Heart right ventricle (tissue), 16 donors: ENCODE measurements at regions of chr18 and their contacts with region 1.

Region 1: GRCh38 chr18:57561728-57562423 is 24.6 kb downstream of the FECH start:
- DNase-seq: peak in 1 of 2 donors; percentile 21
- ATAC-seq: peak in 6 of 8 donors; percentile 35 to 50 (median 42)
- H3K4me3 ChIP-seq: no peak overlapping the region
- H3K27ac ChIP-seq: no peak overlapping the region
- H3K4me1 ChIP-seq: peaks cover 0 to 15% (median 0%) of the 10 kb centered on the region in 9 donors
- H3K27me3 ChIP-seq: no peaks in the 10 kb centered on the region
- CTCF ChIP-seq: peak; percentile 74 to 93 (median 86)

Region 2: DNA sequence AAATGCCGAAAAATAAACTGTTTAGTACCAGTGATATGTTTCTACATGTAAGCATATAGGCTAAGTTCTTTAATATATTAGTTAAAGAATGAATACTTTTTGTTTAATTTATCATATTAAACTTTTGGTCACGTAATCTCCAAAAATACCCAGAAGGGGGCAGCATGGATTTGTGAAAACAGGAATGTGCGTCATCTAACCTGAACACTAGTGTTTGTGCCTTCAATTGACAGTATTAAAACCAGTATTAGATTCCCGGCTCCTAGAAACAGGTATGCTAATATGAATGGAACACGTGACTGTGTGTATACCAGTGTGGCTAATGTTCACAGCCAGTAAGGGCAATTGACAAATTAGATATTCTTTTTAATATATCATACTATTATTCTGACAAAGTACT is 858.9 kb before region 1 on chr18:
- intact Hi-C with region 1: loop called in 1 of 10 experiments (anchors 5 kb)
- DNase-seq: no peak
- ATAC-seq: no peak
- H3K4me3 ChIP-seq: no peak overlapping the region
- H3K27ac ChIP-seq: no peak overlapping the region
- H3K4me1 ChIP-seq: no peaks in the 10 kb centered on the region
- H3K27me3 ChIP-seq: no peaks in the 10 kb centered on the region
- CTCF ChIP-seq: peak in 8 of 9 donors; percentile 21 to 64 (median 44)

Region 3: GRCh38 chr18:56748698-56749268 is 813.1 kb before region 1 on chr18:
- intact Hi-C with region 1: loop called in 9 of 10 experiments (anchors 5 to 10 kb)
- DNase-seq: peak in 1 of 2 donors; percentile 6
- ATAC-seq: no peak
- H3K4me3 ChIP-seq: no peak overlapping the region
- H3K27ac ChIP-seq: no peak overlapping the region
- H3K4me1 ChIP-seq: peaks cover 0 to 25% (median 13%) of the 10 kb centered on the region in 9 donors
- H3K27me3 ChIP-seq: no peaks in the 10 kb centered on the region
- CTCF ChIP-seq: peak; percentile 20 to 82 (median 65)

Region 4: DNA sequence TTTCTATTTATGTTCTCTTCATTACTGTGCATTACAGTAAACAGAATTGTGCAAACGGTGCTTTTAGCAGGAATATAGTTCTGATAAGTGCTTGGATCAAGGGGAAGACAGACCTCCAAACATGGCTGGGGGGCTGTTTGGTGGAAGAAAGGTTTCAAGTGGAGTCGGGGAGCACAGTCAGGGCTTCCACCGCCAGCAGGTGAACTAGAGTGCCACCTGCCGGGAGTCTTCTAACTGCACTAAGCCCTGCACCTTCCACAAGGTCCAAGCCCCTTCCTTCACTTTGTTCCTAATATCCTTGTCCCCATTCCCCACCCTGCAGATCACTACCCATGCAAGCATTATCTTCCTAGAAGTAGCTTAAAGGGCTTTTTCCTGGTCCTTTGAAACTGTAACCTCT is 115.6 kb before region 1 on chr18:
- intact Hi-C with region 1: loop called in 1 of 10 experiments (anchors 10 kb)
- DNase-seq: no peak
- ATAC-seq: no peak
- H3K4me3 ChIP-seq: no peak overlapping the region
- H3K27ac ChIP-seq: no peak overlapping the region
- H3K4me1 ChIP-seq: peaks cover 0 to 4% (median 0%) of the 10 kb centered on the region in 9 donors
- H3K27me3 ChIP-seq: peaks cover 18 to 94% (median 82%) of the 10 kb centered on the region in 7 donors
- CTCF ChIP-seq: peak in 8 of 9 donors; percentile 7 to 49 (median 34)

Region 5: GRCh38 chr18:57975805-57976204 is 413.9 kb after region 1 on chr18:
- intact Hi-C with region 1: no loop called
- DNase-seq: no peak
- ATAC-seq: no peak
- H3K4me3 ChIP-seq: no peak overlapping the region
- H3K27ac ChIP-seq: no peak overlapping the region
- H3K4me1 ChIP-seq: no peaks in the 10 kb centered on the region
- H3K27me3 ChIP-seq: peaks cover 0 to 9% (median 0%) of the 10 kb centered on the region in 7 donors
- CTCF ChIP-seq: no peak